ENCODE measurements at regions of chr6 and their contacts with region 1.

Region 1: GRCh38 chr6:26607434-26608230 is 10.9 kb downstream of the ABT1 start:
- DNase-seq: no peak
- H3K4me3 ChIP-seq: peak overlapping the region in 2 of 4 donors; percentile 15 to 27
- H3K27ac ChIP-seq: no peak overlapping the region
- H3K4me1 ChIP-seq: peaks cover 0 to 6% (median 0%) of the 10 kb centered on the region in 4 donors
- H3K27me3 ChIP-seq: peaks cover 0 to 10% (median under 1%) of the 10 kb centered on the region in 3 donors
- CTCF ChIP-seq: peak in 3 of 4 experiments; percentile 16 to 53 (median 23)
- EP300 ChIP-seq: no peak
- POLR2A ChIP-seq: no peak

Region 2: DNA sequence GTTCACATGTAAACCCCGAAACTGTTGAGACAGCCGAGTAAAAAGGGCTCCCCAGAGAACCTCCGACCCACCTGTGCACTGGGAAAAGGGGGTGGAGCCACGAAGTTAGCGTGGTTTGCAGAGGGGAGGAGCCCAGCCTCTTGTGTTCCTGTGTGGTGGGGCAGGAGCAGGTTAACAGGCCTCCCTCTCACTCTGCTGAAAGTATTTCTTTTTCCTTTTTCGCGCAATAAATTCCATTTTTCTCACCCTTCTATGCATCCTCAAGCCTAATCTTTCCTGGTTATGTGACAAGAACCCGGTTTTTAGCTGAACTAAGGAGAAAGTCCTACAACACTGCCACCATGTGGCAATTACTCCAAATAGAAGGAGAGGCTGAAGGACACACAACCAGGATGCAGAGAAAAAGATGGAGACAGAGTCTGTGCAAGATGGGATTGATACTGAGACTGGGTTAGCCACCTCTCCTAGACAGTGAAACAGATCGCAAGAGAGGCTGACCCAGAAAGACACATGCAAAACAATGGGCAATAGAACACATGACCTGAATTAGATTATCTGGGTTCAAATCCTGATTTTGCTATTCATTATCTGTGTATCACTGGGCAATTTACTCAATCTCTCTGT is 471.2 kb after region 1 on chr6:
- intact Hi-C with region 1: loop called (anchors 2 kb)
- DNase-seq: no peak
- H3K4me3 ChIP-seq: peak overlapping the region in 1 of 4 donors; percentile 9
- H3K27ac ChIP-seq: no peak overlapping the region
- H3K4me1 ChIP-seq: peaks cover 0 to 5% (median 2%) of the 10 kb centered on the region in 4 donors
- H3K27me3 ChIP-seq: peaks cover 0 to 19% (median 0%) of the 10 kb centered on the region in 3 donors
- CTCF ChIP-seq: peak; percentile 36 to 58 (median 50)
- EP300 ChIP-seq: no peak
- POLR2A ChIP-seq: no peak

Measured in sigmoid colon (tissue), 7 donors.